ENCODE measurements at regions of chr7 and their contacts with region 1.

Region 1: DNA sequence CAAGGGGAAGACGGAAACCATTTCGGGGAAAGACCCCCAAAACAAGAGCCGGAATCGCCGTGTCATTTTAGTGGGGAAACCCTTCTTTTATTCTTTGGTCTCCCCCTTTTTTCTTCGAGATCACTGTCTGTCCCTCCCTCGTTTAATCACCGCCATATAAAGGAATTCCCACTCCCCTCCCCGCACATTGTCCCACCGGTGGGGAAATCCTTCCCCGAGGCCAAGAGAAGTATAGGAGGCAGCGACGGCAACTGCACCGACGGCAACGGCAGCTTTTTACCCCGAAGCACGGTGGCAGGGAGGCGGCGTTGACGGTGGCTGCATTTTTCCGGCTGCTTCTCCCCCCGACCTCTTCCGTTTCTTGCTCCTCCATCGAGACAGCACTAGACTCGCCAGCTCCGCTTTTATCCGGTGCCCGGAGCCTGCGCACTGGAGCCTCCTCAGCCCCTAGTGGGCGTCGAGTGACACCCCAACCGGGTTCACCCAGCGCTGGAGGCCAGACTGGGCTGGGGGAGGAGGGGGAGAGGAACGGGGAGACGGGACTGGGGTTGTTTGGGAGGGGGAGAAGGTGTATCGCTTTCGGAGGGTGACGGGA is 687 bp upstream of the KMT2E start:
- DNase-seq: peak; percentile 94
- H3K4me3 ChIP-seq: peak overlapping the region; percentile 97 to 99 (median 98)
- H3K27ac ChIP-seq: peak overlapping the region; percentile 98
- H3K4me1 ChIP-seq: peaks cover 31% of the 10 kb centered on the region
- H3K27me3 ChIP-seq: no peaks in the 10 kb centered on the region
- CTCF ChIP-seq: peak; percentile 56 to 72
- POLR2A ChIP-seq: peak; percentile 21

Region 2: GRCh38 chr7:103344453-103345149 is 1668.7 kb before region 1 on chr7 and contains the start of gene DNAJC2:
- CTCF ChIA-PET with region 1: no interaction called
- POLR2A ChIA-PET with region 1: no interaction called
- dilution Hi-C with region 1: no loop called
- intact Hi-C with region 1: loop called (anchors 2 kb)
- DNase-seq: peak; percentile 86
- H3K4me3 ChIP-seq: peak within 1 kb of the TSS; percentile 91 to 99 (median 94)
- H3K27ac ChIP-seq: peak within 1 kb of the TSS; percentile 85
- H3K4me1 ChIP-seq: peaks cover 29% of the 10 kb centered on the region
- H3K27me3 ChIP-seq: no peaks in the 10 kb centered on the region
- CTCF ChIP-seq: no peak
- POLR2A ChIP-seq: peak; percentile 88
- total RNA-seq, gene DNAJC2: 33.3 and 36.3 TPM in 2 replicates

Region 3: DNA sequence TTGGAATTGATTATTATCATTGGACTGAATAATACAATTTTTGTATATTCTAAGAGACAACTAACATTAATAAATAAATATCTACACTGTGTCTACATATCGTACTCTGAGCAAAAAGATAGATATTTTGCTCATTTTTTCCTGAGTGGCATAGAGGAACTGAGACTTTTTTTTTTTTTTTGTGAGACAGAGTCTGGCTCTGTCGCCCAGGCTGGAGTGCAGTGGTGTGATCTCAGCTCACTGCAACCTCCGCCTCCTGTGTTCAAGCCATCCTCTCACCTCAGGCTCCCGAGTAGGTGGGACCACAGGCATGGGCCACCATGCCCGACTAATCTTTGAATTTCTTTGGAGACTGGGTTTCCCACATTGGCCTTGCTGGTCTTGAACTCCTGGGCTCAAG is 14.7 kb after region 1 on chr7:
- CTCF ChIA-PET with region 1: interaction called, 20 read pairs
- POLR2A ChIA-PET with region 1: interaction called, 5 read pairs
- dilution Hi-C with region 1: no loop called
- intact Hi-C with region 1: no loop called
- DNase-seq: no peak
- H3K4me3 ChIP-seq: no peak overlapping the region
- H3K27ac ChIP-seq: no peak overlapping the region
- H3K4me1 ChIP-seq: peaks cover 11% of the 10 kb centered on the region
- H3K27me3 ChIP-seq: no peaks in the 10 kb centered on the region
- CTCF ChIP-seq: no peak
- POLR2A ChIP-seq: no peak

Region 4: DNA sequence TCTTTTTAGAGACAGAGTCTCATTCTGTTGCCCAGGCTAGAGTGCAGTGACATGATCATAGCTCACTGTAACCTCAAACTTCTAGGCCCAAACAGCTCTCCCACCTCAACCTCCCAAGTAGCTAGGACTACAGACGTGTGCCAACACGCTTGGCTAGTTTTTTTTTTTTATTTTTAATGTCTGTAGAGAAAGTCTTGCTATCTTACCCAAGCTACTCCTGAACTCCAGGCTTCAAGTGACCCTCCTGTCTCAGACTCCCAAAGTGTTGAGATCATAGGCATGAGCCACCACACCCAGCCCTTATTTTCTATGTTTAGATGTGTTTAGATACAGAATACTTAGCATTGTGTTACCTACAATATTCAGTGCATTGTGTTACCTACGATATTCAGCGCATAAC is 47.1 kb after region 1 on chr7:
- CTCF ChIA-PET with region 1: interaction called, 4 read pairs
- POLR2A ChIA-PET with region 1: no interaction called
- dilution Hi-C with region 1: no loop called
- intact Hi-C with region 1: loop called (anchors 5 kb)
- DNase-seq: no peak
- H3K4me3 ChIP-seq: no peak overlapping the region
- H3K27ac ChIP-seq: no peak overlapping the region
- H3K4me1 ChIP-seq: no peaks in the 10 kb centered on the region
- H3K27me3 ChIP-seq: no peaks in the 10 kb centered on the region
- CTCF ChIP-seq: no peak
- POLR2A ChIP-seq: no peak

Region 5: GRCh38 chr7:105439174-105439893 is 426.0 kb after region 1 on chr7:
- CTCF ChIA-PET with region 1: no interaction called
- POLR2A ChIA-PET with region 1: no interaction called
- dilution Hi-C with region 1: no loop called
- intact Hi-C with region 1: loop called (anchors 1 kb)
- DNase-seq: peak; percentile 92
- H3K4me3 ChIP-seq: no peak overlapping the region
- H3K27ac ChIP-seq: peak overlapping the region; percentile 36
- H3K4me1 ChIP-seq: peaks cover 9% of the 10 kb centered on the region
- H3K27me3 ChIP-seq: no peaks in the 10 kb centered on the region
- CTCF ChIP-seq: peak in 1 of 2 donors; percentile 4
- POLR2A ChIP-seq: no peak

Measured in endothelial cell of umbilical vein (primary cell).